CD4-positive, alpha-beta memory T cell (primary cell): ENCODE measurements at regions of chr5 and their contacts with region 1.

Region 1: GRCh38 chr5:110031402-110032140 is 341.8 kb downstream of the MAN2A1 start:
- DNase-seq: peak in 4 of 5 donors; percentile 26 to 33 (median 30)
- H3K4me3 ChIP-seq: no peak overlapping the region
- H3K4me3 Mint-ChIP-seq: peak overlapping the region in 2 of 8 donors; percentile 18 to 27
- H3K27ac ChIP-seq: no peak overlapping the region
- H3K27ac Mint-ChIP-seq: peak overlapping the region in 3 of 7 donors; percentile 3 to 49 (median 29)
- H3K4me1 ChIP-seq: peaks cover 17% of the 10 kb centered on the region
- H3K4me1 Mint-ChIP-seq: peaks cover 15 to 29% (median 22%) of the 10 kb centered on the region in 4 donors
- H3K27me3 ChIP-seq: no peaks in the 10 kb centered on the region
- H3K27me3 Mint-ChIP-seq: no peaks in the 10 kb centered on the region

Region 2: DNA sequence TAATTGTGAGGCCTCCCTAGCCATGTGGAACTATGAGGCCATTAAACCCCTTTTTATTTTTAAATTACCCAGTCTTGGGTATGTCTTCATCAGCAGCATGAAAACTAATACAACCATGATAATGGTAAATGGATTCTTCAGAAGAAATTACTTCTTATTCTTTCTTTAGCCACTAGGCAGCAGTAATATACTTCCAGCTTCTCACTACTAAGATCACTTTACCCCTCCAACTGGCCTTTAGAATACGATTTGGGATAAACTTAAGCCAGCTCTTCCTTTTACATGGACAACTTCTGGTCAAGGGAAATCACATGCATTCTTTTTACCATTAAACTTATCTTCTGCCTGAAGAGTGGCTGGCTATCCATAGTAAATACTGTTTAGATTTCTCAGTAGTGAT is 13.6 kb after region 1 on chr5:
- CTCF ChIA-PET with region 1: interaction called, 3 read pairs
- POLR2A ChIA-PET with region 1: no interaction called
- intact Hi-C with region 1: loop called (anchors 1 kb)
- DNase-seq: no peak
- H3K4me3 ChIP-seq: no peak overlapping the region
- H3K4me3 Mint-ChIP-seq: peak overlapping the region in 1 of 8 donors; percentile 34
- H3K27ac ChIP-seq: no peak overlapping the region
- H3K27ac Mint-ChIP-seq: no peak overlapping the region
- H3K4me1 ChIP-seq: peaks cover 9% of the 10 kb centered on the region
- H3K4me1 Mint-ChIP-seq: peaks cover 7 to 11% (median 8%) of the 10 kb centered on the region in 4 donors
- H3K27me3 ChIP-seq: no peaks in the 10 kb centered on the region
- H3K27me3 Mint-ChIP-seq: peaks cover 0 to 4% of the 10 kb centered on the region in 2 donors